Heart right ventricle (tissue), 16 donors: ENCODE measurements at regions of chr9 and their contacts with region 1.

Region 1: DNA sequence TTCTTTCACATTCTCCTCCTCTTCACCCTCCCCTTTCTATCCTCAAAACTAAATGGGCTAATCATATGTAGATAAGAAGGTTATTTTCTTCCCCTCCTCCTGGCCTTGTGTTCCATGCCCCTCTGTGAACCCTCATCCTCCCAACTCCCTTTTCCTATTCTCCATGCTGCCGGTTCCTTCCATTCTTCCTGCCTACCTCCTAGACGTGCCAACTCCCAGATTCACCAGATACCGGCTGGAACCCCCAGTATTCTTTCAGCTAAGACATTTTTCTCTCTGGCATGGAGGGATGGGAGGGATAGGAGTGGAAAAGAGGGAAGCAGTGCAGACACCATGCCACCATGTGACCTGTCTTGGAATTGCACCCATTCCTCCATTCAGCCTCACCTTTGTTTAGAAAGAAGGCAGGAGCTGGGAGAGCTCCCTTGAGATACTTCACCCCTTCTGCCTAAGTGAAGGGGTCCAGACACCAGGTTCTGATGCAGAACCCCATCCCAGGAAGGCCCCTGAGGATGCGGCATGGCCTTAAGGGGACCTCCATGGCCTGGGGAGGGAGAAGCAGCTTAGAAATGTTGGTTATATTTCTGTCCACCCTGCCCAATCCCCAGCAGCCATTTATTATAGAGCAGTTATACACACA is 4.8 kb downstream of the DNAJB5 start:
- DNase-seq: no peak
- ATAC-seq: peak in 3 of 8 donors; percentile 11 to 22 (median 13)
- H3K4me3 ChIP-seq: peak overlapping the region in 9 of 10 donors; percentile 4 to 43 (median 34)
- H3K27ac ChIP-seq: peak overlapping the region; percentile 84 to 99 (median 95)
- H3K4me1 ChIP-seq: peaks cover 26 to 84% (median 62%) of the 10 kb centered on the region in 9 donors
- H3K27me3 ChIP-seq: no peaks in the 10 kb centered on the region
- CTCF ChIP-seq: peak; percentile 23 to 66 (median 53)

Region 2: GRCh38 chr9:35051069-35051967 is 56.9 kb after region 1 on chr9:
- intact Hi-C with region 1: loop called in 1 of 10 experiments (anchors 10 kb)
- DNase-seq: peak in 1 of 2 donors; percentile 44
- ATAC-seq: peak; percentile 62 to 96 (median 80)
- H3K4me3 ChIP-seq: no peak overlapping the region
- H3K27ac ChIP-seq: peak overlapping the region in 7 of 10 donors; percentile 16 to 68 (median 35)
- H3K4me1 ChIP-seq: peaks cover 0 to 15% (median 7%) of the 10 kb centered on the region in 9 donors
- H3K27me3 ChIP-seq: no peaks in the 10 kb centered on the region
- CTCF ChIP-seq: peak; percentile 26 to 70 (median 65)

Region 3: GRCh38 chr9:35071814-35072460 is 77.6 kb after region 1 on chr9:
- intact Hi-C with region 1: loop called in 4 of 10 experiments (anchors 5 to 10 kb)
- DNase-seq: peak; percentile 86
- ATAC-seq: peak; percentile 66 to 88 (median 85)
- H3K4me3 ChIP-seq: peak overlapping the region; percentile 73 to 100 (median 92)
- H3K27ac ChIP-seq: peak overlapping the region; percentile 96 to 100 (median 100)
- H3K4me1 ChIP-seq: peaks cover 0 to 49% (median 39%) of the 10 kb centered on the region in 9 donors
- H3K27me3 ChIP-seq: no peaks in the 10 kb centered on the region
- CTCF ChIP-seq: peak in 8 of 9 donors; percentile 15 to 68 (median 48)

Region 4: DNA sequence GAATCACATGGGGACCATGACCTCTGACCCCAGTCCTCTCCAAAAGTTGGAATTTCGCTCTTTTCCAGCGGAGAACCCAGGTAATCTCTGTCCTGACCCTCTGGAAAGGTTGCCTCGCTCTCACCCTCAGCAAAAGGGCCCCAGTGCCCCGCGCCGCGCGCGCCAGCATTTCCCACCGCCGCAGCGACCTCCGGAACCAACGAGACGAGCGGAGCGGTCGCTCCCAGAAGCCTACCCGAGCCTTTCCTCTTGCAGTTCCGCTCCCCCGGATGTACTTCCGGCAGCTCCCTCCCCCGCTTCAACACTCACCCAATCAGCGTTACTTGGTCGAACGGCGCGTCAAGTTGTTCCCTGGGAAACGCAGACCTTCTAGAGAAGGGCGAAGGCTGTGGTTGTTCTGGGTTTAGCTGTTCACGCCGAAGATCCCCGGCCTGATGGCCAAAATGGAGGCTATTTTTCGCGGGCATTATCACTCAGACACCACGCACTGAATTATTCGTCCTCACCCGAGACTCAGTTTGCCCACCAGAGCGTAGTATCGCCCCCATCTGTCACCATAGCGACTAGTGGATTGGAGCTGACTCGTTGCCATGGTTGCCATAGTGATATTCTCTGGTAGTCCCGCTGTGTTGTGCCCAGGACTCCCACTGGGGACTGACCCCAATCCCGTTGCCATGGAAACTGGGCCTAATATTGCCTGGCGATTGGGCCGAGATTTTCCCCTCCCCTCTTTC is 108.7 kb after region 1 on chr9 and contains the start of gene STOML2:
- intact Hi-C with region 1: loop called in 2 of 10 experiments (anchors 10 kb)
- DNase-seq: peak; percentile 92 to 96
- ATAC-seq: peak; percentile 89 to 98 (median 97)
- H3K4me3 ChIP-seq: peak within 1 kb of the TSS; percentile 40 to 81 (median 68)
- H3K27ac ChIP-seq: peak within 1 kb of the TSS; percentile 3 to 91 (median 88)
- H3K4me1 ChIP-seq: peaks cover 3 to 27% (median 20%) of the 10 kb centered on the region in 9 donors
- H3K27me3 ChIP-seq: no peaks in the 10 kb centered on the region
- CTCF ChIP-seq: no peak
- total RNA-seq, gene STOML2: 122 to 153 (median 127) TPM

Region 5: DNA sequence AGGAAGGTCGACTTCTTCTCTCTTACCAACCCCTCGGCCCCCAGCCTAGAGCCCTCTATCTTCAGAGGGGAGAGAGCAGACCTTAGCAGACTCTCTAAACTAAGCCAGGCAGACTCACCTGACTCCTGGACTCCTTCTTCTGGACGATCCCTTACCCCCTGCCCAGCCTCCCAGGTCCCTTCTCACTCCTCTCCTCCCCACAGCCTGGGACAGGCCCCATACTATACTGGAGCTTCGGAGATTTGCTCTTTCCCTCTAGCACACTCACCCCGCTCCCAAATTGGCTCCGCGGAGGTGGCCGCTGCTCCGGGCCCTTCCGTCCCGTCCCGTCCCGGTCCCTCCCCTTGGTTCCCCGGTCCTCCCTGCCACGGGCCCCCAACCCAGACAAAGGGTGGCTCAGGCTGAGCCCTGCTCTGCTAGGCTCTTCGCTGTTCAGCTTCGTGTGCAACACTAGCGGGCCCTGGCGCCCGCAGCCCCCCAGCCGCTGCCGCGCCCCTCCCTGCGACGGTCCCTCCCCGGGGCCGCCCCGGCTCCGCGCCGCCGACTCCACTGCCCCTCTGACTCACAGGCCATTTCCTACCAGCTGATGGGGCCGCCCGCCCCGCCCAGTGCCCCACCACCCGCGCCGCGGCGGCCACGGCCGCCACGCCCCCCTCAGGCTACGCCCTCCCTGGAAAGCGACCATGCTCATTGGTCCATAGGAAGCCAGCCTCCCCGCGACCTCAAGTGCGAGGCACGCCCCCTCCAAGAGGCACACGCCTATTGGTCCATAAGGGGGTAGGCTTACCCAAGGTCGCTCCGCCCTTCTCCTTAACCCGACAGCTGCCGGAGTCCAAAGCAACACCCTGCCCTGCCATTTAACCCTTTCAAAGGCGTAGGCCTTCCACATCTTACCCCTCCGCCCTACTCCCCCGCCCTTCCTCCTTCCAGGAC is 116.9 kb after region 1 on chr9:
- intact Hi-C with region 1: loop called in 2 of 10 experiments (anchors 5 to 10 kb)
- DNase-seq: peak; percentile 98
- ATAC-seq: peak; percentile 72 to 85 (median 82)
- H3K4me3 ChIP-seq: peak overlapping the region; percentile 49 to 89 (median 80)
- H3K27ac ChIP-seq: peak overlapping the region; percentile 56 to 98 (median 92)
- H3K4me1 ChIP-seq: peaks cover 17 to 61% (median 46%) of the 10 kb centered on the region in 9 donors
- H3K27me3 ChIP-seq: no peaks in the 10 kb centered on the region
- CTCF ChIP-seq: no peak